ENCODE measurements at regions of chr2 and their contacts with region 1.

Region 1: DNA sequence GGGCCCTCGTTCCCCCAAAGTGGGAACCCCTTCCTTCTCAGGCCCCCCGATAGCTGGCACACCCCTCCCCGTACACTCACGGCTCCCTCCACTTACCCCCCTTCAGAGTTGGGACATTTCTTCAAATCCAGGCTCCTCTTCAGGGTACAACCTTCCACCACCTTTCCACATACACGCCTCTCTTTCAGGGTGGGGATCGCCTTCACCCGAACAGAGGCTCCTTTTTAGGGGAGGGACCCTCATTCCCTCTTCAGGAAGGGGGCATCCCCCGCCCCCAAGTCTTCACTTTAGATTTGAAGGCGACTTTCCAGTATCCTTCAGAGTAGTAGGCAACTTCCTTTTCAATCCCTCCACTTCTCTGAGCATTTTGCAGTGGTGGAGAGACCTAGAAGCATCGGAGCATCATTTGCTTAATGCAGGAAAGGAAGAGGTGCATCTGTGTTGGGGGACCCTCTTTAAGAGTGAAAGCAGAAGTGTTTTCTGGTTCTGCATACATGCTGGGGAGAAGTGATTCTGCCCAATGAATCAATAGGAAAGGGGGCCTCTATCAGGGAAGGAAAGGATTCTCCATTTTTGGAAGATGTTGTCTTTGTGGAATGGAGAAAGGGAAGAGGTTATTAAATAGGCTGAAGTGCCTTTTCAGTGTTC is 845 bp downstream of the EML4 start:
- DNase-seq: no peak
- ATAC-seq: peak; percentile 20

Region 2: DNA sequence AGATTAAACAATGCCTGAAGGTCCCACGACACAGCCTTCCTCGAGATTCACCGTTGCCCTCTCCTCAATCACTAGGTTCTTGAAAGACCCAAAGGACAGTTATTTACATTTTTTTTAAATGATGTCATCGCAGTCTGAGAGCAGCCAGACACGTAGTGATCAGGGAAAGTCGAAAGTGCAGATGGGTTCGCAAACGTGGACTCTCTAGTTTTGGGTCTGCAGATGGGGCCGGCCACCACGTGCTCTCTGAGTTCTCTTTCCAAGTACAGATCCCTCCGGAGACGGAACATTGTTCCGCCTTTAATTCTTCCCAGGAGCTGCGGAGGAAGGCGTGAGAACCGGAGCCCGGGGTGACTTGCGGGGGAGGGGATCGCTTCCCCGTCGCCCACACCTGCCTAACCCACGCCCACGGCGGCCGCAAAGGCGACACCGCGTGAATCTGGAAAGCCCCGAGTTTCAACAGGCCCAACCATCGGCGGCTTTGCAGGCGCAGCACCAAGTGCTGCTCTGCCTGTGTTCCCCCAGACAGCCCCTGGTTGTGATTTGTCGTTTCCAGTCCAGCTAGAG is 67.9 kb before region 1 on chr2:
- intact Hi-C with region 1: loop called (anchors 10 kb)
- DNase-seq: peak; percentile 75
- ATAC-seq: peak; percentile 67

Region 3: DNA sequence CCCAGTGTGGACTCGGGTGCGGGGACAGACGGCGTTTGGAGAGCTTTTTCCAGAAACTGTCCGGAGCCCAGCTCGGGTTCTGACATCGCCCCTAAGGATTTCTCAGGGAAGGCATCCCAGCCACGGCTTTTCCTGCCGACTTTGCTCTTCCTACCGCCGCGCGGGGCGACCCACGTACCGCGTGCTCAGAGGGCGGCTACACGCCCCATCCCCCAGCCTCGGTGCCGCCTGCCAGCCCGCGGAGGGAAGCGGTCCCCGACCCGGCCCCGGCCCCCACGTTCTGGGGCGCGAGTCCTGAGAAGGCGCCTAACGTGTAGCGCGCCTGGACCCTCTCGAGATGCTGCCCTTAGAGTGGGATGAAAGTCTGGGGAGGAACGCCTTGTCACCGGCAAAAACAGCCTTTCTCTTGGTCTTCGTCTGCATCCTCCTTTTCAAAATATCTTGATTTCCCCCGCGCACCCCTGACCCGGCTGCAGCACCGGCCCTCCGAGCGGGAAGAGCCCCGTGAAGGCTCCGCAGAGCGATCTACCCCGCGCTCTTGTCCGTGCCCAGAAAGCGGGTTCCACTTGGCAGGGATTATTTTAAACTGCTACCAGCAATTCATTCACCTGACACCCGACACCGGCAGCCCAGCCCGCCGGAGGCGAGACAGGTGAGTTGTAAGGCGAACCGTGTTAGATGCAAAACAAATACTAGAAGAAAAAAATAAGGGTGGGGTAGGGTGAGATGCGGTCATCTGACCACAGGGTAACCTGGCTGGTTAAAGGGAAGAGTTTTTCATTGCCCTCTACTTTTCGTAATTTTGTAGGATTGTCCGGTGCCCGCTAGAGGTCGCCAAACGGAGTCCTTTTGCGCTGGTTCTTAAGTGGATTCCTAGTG is 324.6 kb after region 1 on chr2:
- intact Hi-C with region 1: no loop called
- DNase-seq: peak; percentile 65
- ATAC-seq: peak; percentile 82